ENCODE measurements at regions of chr19 and their contacts with region 1.

Region 1: GRCh38 chr19:46990991-46991676 is 28.5 kb upstream of the NPAS1 start:
- DNase-seq: peak; percentile 45 to 64 (median 51)
- H3K4me3 ChIP-seq: no peak overlapping the region
- H3K4me3 Mint-ChIP-seq: peak overlapping the region in 3 of 8 donors; percentile 2 to 46 (median 34)
- H3K27ac ChIP-seq: no peak overlapping the region
- H3K27ac Mint-ChIP-seq: peak overlapping the region in 5 of 7 donors; percentile 42 to 59 (median 48)
- H3K4me1 ChIP-seq: peaks cover 14% of the 10 kb centered on the region
- H3K4me1 Mint-ChIP-seq: peaks cover 12 to 20% (median 14%) of the 10 kb centered on the region in 4 donors
- H3K27me3 ChIP-seq: no peaks in the 10 kb centered on the region
- H3K27me3 Mint-ChIP-seq: no peaks in the 10 kb centered on the region

Region 2: GRCh38 chr19:46753420-46754155 is 237.5 kb before region 1 on chr19:
- CTCF ChIA-PET with region 1: interaction called, 4 read pairs
- POLR2A ChIA-PET with region 1: no interaction called
- intact Hi-C with region 1: loop called (anchors 2 kb)
- DNase-seq: peak; percentile 62 to 80 (median 68)
- H3K4me3 ChIP-seq: no peak overlapping the region
- H3K4me3 Mint-ChIP-seq: no peak overlapping the region
- H3K27ac ChIP-seq: no peak overlapping the region
- H3K27ac Mint-ChIP-seq: peak overlapping the region in 5 of 7 donors; percentile 22 to 73 (median 57)
- H3K4me1 ChIP-seq: no peaks in the 10 kb centered on the region
- H3K4me1 Mint-ChIP-seq: peaks cover 6 to 13% (median 10%) of the 10 kb centered on the region in 4 donors
- H3K27me3 ChIP-seq: no peaks in the 10 kb centered on the region
- H3K27me3 Mint-ChIP-seq: no peaks in the 10 kb centered on the region

Region 3: DNA sequence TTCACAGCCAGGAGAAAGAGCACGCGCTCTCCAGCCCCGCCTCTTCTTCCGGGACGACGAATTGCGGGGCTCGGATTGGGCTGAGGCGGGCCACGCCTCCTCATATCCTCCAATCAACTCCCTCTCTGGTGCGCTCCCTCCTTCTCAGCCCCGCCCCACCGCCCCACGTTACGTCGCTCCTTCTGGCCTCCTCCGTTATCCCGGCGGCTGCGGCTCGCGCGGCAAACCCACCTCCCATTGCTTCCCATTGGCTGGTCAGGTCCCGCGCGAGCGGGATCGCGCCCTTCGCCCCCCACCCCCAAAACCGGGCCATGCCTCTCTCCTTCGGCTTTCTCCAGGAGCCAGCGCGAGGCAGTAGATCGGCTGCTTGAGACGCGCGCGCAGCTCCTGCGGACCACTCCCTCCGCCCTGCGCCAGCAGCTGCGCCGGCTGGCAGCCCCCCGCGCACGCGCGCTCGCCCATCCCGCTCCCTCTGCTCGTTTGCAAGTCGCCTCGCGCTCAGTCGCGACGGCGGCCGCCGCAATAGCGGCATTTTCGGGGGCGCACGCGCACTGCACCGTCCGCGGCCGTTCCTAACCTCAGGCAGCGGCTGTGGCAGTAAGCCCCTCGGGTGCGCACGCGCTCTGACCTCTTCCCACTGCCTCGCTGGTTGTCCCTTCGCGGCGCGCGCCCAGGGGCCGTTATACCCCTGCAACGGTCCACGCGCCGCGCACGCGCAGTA is 130.8 kb before region 1 on chr19:
- CTCF ChIA-PET with region 1: interaction called, 123 read pairs
- POLR2A ChIA-PET with region 1: interaction called, 28 read pairs
- intact Hi-C with region 1: loop called (anchors 1 kb)
- DNase-seq: peak; percentile 93 to 96 (median 94)
- H3K4me3 ChIP-seq: peak overlapping the region; percentile 42 to 78
- H3K4me3 Mint-ChIP-seq: peak overlapping the region; percentile 91 to 98 (median 95)
- H3K27ac ChIP-seq: peak overlapping the region; percentile 79
- H3K27ac Mint-ChIP-seq: peak overlapping the region; percentile 94 to 99 (median 97)
- H3K4me1 ChIP-seq: peaks cover 62% of the 10 kb centered on the region
- H3K4me1 Mint-ChIP-seq: peaks cover 19 to 22% (median 19%) of the 10 kb centered on the region in 4 donors
- H3K27me3 ChIP-seq: no peaks in the 10 kb centered on the region
- H3K27me3 Mint-ChIP-seq: no peaks in the 10 kb centered on the region

Region 4: DNA sequence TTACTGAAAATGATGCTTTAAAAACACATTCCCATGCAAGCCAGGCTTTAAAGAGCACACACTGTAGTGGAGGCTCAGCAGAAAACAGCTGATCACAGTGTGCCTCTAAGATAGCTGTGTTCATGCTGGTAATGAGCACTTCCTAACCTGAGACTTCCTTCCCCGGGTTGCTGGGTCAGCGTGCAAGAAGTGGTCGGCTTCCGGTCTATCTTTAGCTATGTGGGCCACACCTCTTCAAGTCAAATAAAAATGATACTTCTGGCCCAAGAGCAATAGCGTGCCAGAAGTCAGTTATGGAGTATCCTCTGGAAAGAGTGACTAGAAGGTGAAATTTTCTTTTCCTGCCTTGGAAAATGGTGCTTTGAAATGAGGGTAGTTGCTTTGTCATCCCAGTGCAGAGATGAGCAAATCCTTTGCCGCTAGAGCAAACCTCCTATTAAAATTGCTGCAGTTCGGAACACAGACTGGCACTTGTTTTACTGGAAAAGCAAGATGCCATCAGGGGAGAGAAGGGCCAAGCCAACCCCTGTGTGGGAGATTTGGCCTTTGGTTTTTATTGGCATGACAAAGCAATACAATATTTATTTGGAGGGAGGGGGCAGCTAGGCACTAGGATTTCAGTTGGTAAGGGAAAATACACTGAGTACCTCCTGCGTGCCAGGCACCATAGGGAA is 66.1 kb before region 1 on chr19:
- CTCF ChIA-PET with region 1: interaction called, 72 read pairs
- POLR2A ChIA-PET with region 1: interaction called, 4 read pairs
- intact Hi-C with region 1: no loop called
- DNase-seq: no peak
- H3K4me3 ChIP-seq: no peak overlapping the region
- H3K4me3 Mint-ChIP-seq: peak overlapping the region in 7 of 8 donors; percentile 62 to 74 (median 74)
- H3K27ac ChIP-seq: no peak overlapping the region
- H3K27ac Mint-ChIP-seq: peak overlapping the region in 6 of 7 donors; percentile 38 to 88 (median 76)
- H3K4me1 ChIP-seq: peaks cover 47% of the 10 kb centered on the region
- H3K4me1 Mint-ChIP-seq: peaks cover 44 to 68% (median 56%) of the 10 kb centered on the region in 4 donors
- H3K27me3 ChIP-seq: no peaks in the 10 kb centered on the region
- H3K27me3 Mint-ChIP-seq: no peaks in the 10 kb centered on the region

Region 5: DNA sequence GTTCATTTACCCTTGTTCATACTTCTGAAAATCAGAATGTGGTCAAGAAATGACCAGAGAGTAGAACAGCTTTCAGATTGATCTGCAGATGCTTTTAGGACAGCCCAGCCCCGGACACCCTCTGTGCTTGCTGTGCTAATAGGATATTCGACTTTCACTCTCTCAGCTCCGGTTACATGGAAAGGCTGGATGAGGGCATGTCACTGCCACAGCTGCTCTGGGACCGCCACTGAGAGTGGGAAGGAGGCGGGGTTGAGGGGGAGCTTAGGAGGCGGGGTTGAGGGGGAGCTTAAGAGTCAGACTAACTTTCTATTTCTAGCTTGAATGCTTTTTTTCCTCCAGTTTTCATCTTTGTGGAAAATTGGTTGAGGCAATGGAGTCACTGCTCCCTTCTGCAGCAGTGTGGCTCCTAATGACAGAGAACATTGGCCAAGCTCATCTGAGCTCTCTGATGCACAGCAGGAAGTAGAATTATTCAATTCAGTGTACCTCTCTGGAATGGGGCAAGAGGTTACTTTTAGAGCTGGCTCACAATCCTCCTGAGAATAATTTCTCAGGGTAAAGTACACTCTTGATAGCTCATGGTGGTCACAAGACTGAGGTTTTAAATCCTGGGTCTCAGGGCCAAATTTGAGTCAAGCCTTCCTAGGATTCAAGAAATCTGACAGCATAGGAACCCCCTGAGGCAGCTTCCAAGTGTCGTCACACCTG is 46.1 kb before region 1 on chr19:
- CTCF ChIA-PET with region 1: interaction called, 13 read pairs
- POLR2A ChIA-PET with region 1: no interaction called
- intact Hi-C with region 1: no loop called
- DNase-seq: no peak
- H3K4me3 ChIP-seq: no peak overlapping the region
- H3K4me3 Mint-ChIP-seq: peak overlapping the region in 1 of 8 donors; percentile 26
- H3K27ac ChIP-seq: no peak overlapping the region
- H3K27ac Mint-ChIP-seq: peak overlapping the region in 3 of 7 donors; percentile 59 to 88 (median 63)
- H3K4me1 ChIP-seq: peaks cover 61% of the 10 kb centered on the region
- H3K4me1 Mint-ChIP-seq: peaks cover 41 to 68% (median 55%) of the 10 kb centered on the region in 4 donors
- H3K27me3 ChIP-seq: no peaks in the 10 kb centered on the region
- H3K27me3 Mint-ChIP-seq: no peaks in the 10 kb centered on the region

Region 6: DNA sequence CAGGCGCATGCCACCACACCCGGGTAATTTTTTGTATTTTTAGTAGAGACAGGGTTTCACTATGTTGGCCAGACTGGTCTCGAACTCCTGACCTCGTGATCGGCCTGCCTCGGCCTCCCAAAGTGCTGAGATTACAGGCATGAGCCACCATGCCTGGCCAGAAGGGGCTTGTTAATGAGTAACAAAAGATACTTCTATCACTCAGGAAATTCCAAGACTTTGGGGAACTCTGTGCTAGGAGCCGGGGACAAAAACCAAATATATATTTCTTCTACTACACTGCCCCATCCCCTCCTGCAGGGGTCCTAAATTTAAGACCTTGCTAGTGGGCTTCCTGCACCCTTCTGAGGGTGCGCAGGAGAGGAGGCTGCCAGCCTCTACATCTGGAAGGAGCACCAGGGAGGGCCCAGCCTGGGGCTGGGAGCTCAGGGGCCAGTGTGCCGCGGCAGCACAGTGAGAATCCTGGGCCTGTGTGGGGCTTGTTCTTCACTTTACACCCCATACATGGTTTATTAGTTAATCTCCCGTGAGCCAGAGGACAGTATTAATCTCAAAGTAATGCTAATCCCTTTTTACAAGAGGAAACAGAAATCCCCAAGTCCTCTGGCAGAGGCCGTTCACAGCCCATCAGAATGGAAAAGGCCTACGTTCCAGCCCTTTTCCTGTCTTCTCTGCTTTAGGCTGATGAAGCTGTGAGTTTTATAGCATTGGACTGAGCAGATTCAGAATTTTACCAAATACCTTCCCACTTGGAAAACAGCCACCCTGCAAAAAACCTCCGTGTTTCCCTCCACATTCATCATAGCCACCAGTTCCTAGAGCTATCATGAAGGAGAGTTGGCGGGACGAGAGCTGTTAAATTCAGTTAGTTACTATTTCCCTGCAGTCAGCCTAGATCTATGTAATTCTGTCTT is 15.9 kb before region 1 on chr19:
- CTCF ChIA-PET with region 1: interaction called, 18 read pairs
- POLR2A ChIA-PET with region 1: no interaction called
- intact Hi-C with region 1: no loop called
- DNase-seq: no peak
- H3K4me3 ChIP-seq: no peak overlapping the region
- H3K4me3 Mint-ChIP-seq: no peak overlapping the region
- H3K27ac ChIP-seq: no peak overlapping the region
- H3K27ac Mint-ChIP-seq: no peak overlapping the region
- H3K4me1 ChIP-seq: peaks cover 16% of the 10 kb centered on the region
- H3K4me1 Mint-ChIP-seq: peaks cover 15 to 36% (median 26%) of the 10 kb centered on the region in 4 donors
- H3K27me3 ChIP-seq: no peaks in the 10 kb centered on the region
- H3K27me3 Mint-ChIP-seq: no peaks in the 10 kb centered on the region

Region 7: DNA sequence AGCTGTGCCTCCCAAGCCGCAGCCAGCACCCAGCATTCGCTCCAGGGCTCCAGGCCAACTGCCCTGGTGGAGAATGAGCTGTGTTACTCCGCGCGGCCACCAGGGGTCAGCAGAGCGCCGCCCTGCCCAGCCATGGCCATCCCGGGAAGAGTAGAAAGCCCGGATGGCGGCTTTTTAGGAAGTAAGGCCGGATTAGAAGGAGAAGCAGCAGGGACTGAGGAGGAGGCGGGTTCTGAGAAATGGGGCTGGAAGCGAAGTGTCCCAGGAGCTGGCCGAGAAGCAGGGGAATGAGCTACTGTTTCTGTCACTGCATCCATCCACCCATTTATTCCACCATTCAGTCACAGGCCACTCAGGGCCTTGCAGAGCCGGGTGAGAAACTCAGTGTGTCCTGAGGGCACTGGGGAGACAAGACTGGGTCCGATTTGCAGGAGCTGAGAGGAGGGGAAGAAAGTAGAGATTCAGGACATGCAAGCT is 21.9 kb after region 1 on chr19:
- CTCF ChIA-PET with region 1: interaction called, 25 read pairs
- POLR2A ChIA-PET with region 1: no interaction called
- intact Hi-C with region 1: no loop called
- DNase-seq: peak; percentile 51 to 62 (median 53)
- H3K4me3 ChIP-seq: no peak overlapping the region
- H3K4me3 Mint-ChIP-seq: peak overlapping the region in 6 of 8 donors; percentile 6 to 65 (median 30)
- H3K27ac ChIP-seq: no peak overlapping the region
- H3K27ac Mint-ChIP-seq: peak overlapping the region in 2 of 7 donors; percentile 53 to 57
- H3K4me1 ChIP-seq: peaks cover 7% of the 10 kb centered on the region
- H3K4me1 Mint-ChIP-seq: peaks cover 8 to 9% (median 9%) of the 10 kb centered on the region in 4 donors
- H3K27me3 ChIP-seq: no peaks in the 10 kb centered on the region
- H3K27me3 Mint-ChIP-seq: peaks cover 5 to 10% of the 10 kb centered on the region in 2 donors

Region 8: GRCh38 chr19:47124937-47125668 is 134.0 kb after region 1 on chr19:
- CTCF ChIA-PET with region 1: no interaction called
- POLR2A ChIA-PET with region 1: no interaction called
- intact Hi-C with region 1: no loop called
- DNase-seq: peak in 4 of 5 donors; percentile 54 to 63 (median 60)
- H3K4me3 ChIP-seq: no peak overlapping the region
- H3K4me3 Mint-ChIP-seq: no peak overlapping the region
- H3K27ac ChIP-seq: no peak overlapping the region
- H3K27ac Mint-ChIP-seq: peak overlapping the region in 4 of 7 donors; percentile 30 to 77 (median 42)
- H3K4me1 ChIP-seq: no peaks in the 10 kb centered on the region
- H3K4me1 Mint-ChIP-seq: peaks cover 3 to 6% (median 6%) of the 10 kb centered on the region in 4 donors
- H3K27me3 ChIP-seq: no peaks in the 10 kb centered on the region
- H3K27me3 Mint-ChIP-seq: no peaks in the 10 kb centered on the region

Region 9: DNA sequence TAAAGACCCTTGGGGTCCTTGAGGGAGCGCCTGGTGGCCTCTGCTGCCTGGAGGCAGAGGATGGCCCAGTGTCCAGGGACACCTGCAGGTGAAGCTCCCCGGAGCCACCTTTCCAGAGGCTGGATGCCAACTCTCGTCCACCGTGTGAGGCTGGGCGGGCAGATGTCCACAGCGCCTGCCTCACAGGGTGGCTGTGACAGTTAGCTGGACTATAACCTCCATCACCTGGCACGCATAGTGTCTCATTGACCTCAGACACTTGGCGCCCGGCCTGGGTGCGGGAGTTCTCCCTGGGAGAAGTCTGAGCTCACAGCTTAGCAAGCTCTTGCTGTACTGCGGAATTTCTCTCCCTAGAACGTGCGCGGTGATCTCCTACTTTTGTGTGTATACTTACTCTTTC is 627.6 kb after region 1 on chr19:
- CTCF ChIA-PET with region 1: no interaction called
- POLR2A ChIA-PET with region 1: no interaction called
- intact Hi-C with region 1: no loop called
- DNase-seq: no peak
- H3K4me3 ChIP-seq: no peak overlapping the region
- H3K4me3 Mint-ChIP-seq: no peak overlapping the region
- H3K27ac ChIP-seq: no peak overlapping the region
- H3K27ac Mint-ChIP-seq: no peak overlapping the region
- H3K4me1 ChIP-seq: peaks cover 32% of the 10 kb centered on the region
- H3K4me1 Mint-ChIP-seq: peaks cover 19 to 61% (median 35%) of the 10 kb centered on the region in 4 donors
- H3K27me3 ChIP-seq: no peaks in the 10 kb centered on the region
- H3K27me3 Mint-ChIP-seq: no peaks in the 10 kb centered on the region